ENCODE measurements at regions of chr14 and their contacts with region 1.

Region 1: DNA sequence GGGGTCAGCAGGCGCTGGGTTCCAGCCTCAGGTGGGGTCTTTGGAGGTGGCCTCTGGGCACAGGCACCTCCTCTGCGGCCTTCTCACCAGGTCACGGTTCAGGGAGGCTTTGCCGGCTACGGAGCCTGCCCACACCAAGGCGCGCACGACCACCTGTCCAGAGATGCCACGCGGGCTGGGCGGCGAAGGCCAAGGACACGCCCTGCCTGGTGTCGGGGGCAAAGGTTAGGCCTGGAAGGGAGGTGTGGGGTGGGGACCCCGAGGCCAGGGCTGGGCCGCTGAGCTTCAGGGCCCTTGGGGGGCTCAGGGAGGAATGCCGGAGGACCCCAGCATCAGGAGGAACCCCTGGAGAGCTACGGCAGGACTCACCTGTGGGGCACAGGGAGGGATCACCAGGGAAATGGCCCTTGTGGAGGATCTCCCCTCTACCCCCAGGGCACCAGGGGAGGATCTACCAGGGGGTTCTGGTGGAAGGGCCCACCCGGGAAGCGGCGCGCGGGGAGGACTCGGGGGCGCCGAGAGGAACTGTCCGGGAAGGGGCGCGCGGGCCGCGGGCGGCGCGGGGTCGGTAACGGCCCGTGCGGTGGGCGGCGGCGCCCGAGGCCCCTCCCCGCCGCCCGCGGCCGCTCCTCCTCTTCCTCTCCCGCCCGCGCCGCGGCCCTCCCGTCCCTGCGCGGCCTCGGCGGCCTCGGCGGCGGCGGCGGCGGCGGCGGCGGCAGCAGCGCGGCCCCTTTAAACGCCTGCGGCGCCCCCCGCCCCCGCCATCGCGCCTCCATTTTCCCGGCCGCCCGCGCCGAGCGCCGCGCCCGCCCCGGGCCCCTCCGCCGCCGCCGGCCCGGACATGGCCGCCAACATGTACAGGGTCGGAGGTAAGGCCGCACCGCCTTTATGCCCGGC is at the start of gene MTA1:
- DNase-seq: no peak
- H3K4me3 ChIP-seq: peak within 1 kb of the TSS; percentile 62 to 88 (median 78)
- H3K27ac ChIP-seq: peak within 1 kb of the TSS; percentile 77
- H3K4me1 ChIP-seq: peaks cover 0 to 28% (median 23%) of the 10 kb centered on the region in 4 experiments; a peak in 5 of 7 replicates
- H3K27me3 ChIP-seq: peaks cover 0 to 4% (median 2%) of the 10 kb centered on the region in 4 experiments; a peak in 3 of 7 replicates
- CTCF ChIP-seq: no peak
- EP300 ChIP-seq: no peak
- POLR2A ChIP-seq: no peak
- RAD21 ChIP-seq: no peak
- total RNA-seq, gene MTA1: 217 and 221 TPM in 2 replicates

Region 2: DNA sequence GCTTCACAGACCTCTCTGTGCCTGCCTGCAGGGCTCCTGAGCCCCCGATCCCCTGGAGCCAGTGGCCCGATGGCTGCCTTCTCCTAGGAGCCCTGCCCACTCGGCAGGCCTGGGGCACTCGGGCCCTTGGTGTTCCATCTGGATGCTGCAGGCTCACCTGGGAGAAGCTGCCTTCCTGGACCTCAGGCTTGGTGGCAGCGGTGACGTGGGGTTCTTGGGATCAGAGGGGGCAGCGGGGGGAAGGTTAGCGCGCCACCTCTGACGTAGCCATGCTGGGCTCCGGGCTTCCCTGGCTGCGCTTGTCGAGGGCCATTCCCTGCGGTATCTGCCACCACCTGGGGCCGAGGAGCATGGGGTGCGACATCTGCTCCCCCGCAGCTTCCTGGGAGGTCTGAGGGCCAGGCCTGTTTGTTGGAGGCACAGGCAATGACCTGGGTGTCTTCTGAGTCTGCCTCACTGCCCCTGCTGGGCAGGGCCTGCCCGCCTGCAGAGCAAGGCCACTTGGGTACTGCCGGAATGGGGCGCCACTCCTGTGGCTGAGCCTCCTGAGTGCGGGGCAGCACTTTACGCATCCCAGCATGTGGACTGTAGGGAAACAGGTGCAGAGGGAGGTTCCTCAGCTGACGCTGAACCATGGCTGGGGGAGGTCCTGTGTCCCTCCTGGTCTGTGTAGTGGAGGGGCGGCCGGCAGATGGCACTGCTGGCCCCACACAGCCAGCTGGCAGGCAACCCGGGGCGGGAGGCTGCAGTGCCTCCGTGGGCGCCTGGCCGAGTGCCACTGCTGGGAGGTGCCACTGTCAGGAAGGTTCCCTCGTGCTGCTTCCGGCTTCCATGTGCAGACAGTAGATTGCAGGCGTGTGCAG is 20.5 kb after region 1 on chr14:
- CTCF ChIA-PET with region 1: interaction called, 5 read pairs
- POLR2A ChIA-PET with region 1: interaction called, 43 read pairs
- DNase-seq: no peak
- H3K4me3 ChIP-seq: no peak overlapping the region
- H3K27ac ChIP-seq: no peak overlapping the region
- H3K4me1 ChIP-seq: peaks cover 0 to 3% (median 0%) of the 10 kb centered on the region in 4 experiments; a peak in 2 of 7 replicates
- H3K27me3 ChIP-seq: no peaks in the 10 kb centered on the region
- CTCF ChIP-seq: peak in 1 of 3 experiments; percentile 18; a peak in 1 of 4 replicates
- EP300 ChIP-seq: no peak
- POLR2A ChIP-seq: no peak
- RAD21 ChIP-seq: 0 out of 4 replicates have a peak, but pooled peaks of 1 of the 2 experiments have one; percentile 7